ENCODE measurements at regions of chr20 and their contacts with region 1.

Region 1: GRCh38 chr20:44747166-44748004 is 1.7 kb downstream of the KCNK15 start:
- DNase-seq: peak; percentile 63
- H3K4me3 ChIP-seq: no peak overlapping the region
- H3K27ac ChIP-seq: no peak overlapping the region
- H3K4me1 ChIP-seq: peaks cover 4% of the 10 kb centered on the region
- H3K27me3 ChIP-seq: peaks cover 11 to 15% of the 10 kb centered on the region in 2 experiments
- CTCF ChIP-seq: peak; percentile 70 to 79
- POLR2A ChIP-seq: no peak

Region 2: GRCh38 chr20:44776977-44777376 is 29.6 kb after region 1 on chr20:
- CTCF ChIA-PET with region 1: interaction called, 12 read pairs
- POLR2A ChIA-PET with region 1: no interaction called
- dilution Hi-C with region 1: no loop called
- intact Hi-C with region 1: no loop called
- DNase-seq: peak; percentile 22
- H3K4me3 ChIP-seq: no peak overlapping the region
- H3K27ac ChIP-seq: no peak overlapping the region
- H3K4me1 ChIP-seq: no peaks in the 10 kb centered on the region
- H3K27me3 ChIP-seq: peaks cover 0 to 2% of the 10 kb centered on the region in 2 experiments
- CTCF ChIP-seq: no peak
- POLR2A ChIP-seq: no peak

Region 3: DNA sequence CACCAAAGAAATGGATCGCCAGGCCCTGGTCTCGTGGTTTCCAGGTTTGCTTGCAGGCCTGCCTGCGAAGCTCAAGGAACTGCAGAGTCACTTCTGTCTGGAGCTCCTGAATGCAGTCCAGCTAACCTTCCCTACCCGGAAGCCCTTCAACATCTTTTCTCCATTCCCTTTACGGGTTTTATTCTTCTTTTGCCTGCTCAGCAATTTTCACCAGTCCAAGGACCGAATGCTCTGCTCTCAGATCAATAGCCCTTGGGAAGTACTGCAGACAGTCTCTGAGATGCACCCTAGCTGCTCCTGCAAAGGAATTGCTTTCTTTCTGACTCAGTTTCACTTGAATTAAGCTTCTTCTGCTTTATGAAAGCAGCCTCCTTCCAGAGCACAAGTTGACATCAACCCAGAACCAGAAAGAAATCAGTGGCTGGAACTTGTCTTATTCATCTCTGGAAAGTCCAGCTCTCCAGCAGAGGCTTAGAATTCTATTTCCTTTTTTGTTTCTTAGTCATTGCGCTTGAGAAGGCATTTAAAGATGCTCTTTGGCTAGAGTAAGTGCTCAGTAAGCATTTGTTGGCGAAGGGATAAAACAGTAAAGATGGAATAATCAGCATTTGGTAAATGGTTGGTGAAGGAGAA is 119.4 kb after region 1 on chr20:
- CTCF ChIA-PET with region 1: interaction called, 106 read pairs
- POLR2A ChIA-PET with region 1: no interaction called
- dilution Hi-C with region 1: no loop called
- intact Hi-C with region 1: loop called (anchors 1 kb)
- DNase-seq: no peak
- H3K4me3 ChIP-seq: no peak overlapping the region
- H3K27ac ChIP-seq: no peak overlapping the region
- H3K4me1 ChIP-seq: no peaks in the 10 kb centered on the region
- H3K27me3 ChIP-seq: peaks cover 8 to 14% of the 10 kb centered on the region in 2 experiments
- CTCF ChIP-seq: no peak
- POLR2A ChIP-seq: no peak

Region 4: DNA sequence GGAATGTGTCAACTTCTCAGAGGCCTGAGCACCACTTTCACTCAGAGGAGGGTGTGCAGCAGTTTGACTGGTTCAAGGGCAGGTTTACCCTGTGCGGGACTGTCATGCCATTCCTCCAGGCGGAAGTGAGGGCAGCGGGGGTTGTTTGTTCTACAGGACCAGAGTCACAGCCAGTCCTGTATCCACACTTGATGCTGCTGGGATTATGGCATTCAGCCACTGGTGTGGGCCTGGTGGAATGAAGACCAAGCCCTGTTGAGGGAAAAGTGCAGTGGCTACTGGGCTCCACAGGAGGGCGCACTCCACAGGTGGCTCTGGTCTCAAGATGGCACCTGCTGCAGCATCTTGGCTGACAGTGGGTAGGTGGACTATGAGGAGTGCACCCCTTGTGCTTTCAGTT is 488.6 kb after region 1 on chr20:
- CTCF ChIA-PET with region 1: no interaction called
- POLR2A ChIA-PET with region 1: no interaction called
- dilution Hi-C with region 1: no loop called
- intact Hi-C with region 1: no loop called
- DNase-seq: no peak
- H3K4me3 ChIP-seq: no peak overlapping the region
- H3K27ac ChIP-seq: no peak overlapping the region
- H3K4me1 ChIP-seq: no peaks in the 10 kb centered on the region
- H3K27me3 ChIP-seq: peaks cover 6 to 10% of the 10 kb centered on the region in 2 experiments
- CTCF ChIP-seq: peak; percentile 51 to 56
- POLR2A ChIP-seq: no peak

Measured in endothelial cell of umbilical vein (primary cell).